ENCODE measurements at regions of chr4 and their contacts with region 1.

Region 1: DNA sequence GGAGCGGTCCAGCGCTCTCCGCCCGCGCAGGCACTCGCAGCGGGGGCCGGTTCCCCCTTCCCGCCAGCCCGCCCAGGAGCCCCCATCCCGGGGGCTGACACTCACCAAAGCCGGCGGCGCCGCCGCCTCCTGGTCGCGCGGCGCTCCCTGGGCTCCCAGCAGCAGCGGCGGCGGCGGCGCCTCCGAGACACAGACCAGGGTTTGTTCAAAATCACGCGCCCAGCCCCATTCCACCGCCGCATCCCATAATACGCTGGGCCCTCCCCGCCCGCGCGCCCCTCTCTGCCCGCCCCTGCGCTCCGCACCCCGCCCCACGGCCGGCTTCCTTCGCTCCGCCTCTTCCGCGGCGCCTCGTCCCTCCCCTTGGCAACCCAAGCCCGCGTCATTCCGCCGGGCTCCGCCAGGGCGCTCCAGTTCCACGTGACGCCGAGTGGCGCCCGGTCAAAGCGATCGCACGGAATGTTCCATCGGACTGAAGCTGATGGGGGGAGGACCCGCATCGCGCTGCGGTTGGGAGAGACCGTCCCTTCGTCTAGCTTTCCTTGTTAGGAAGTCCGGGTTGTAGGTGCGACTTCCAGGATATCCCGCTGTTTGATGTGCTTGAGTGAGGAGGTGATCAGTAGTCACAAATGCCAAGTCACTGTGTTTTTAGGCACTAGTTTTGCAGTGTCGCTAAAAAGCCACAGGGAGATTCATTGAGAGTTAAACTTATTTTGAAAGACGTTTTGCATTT is 2.2 kb upstream of the LIN54 start:
- DNase-seq: peak; percentile 95 to 97
- H3K4me3 ChIP-seq: peak overlapping the region; percentile 81 to 91 (median 85)
- H3K27ac ChIP-seq: peak overlapping the region; percentile 57 to 89 (median 78)
- H3K4me1 ChIP-seq: peaks cover 8 to 28% of the 10 kb centered on the region in 2 donors
- H3K27me3 ChIP-seq: no peaks in the 10 kb centered on the region
- CTCF ChIP-seq: peak in 5 of 6 experiments; percentile 23 to 69 (median 55)
- POLR2A ChIP-seq: peak in 1 of 2 donors; percentile 80

Region 2: DNA sequence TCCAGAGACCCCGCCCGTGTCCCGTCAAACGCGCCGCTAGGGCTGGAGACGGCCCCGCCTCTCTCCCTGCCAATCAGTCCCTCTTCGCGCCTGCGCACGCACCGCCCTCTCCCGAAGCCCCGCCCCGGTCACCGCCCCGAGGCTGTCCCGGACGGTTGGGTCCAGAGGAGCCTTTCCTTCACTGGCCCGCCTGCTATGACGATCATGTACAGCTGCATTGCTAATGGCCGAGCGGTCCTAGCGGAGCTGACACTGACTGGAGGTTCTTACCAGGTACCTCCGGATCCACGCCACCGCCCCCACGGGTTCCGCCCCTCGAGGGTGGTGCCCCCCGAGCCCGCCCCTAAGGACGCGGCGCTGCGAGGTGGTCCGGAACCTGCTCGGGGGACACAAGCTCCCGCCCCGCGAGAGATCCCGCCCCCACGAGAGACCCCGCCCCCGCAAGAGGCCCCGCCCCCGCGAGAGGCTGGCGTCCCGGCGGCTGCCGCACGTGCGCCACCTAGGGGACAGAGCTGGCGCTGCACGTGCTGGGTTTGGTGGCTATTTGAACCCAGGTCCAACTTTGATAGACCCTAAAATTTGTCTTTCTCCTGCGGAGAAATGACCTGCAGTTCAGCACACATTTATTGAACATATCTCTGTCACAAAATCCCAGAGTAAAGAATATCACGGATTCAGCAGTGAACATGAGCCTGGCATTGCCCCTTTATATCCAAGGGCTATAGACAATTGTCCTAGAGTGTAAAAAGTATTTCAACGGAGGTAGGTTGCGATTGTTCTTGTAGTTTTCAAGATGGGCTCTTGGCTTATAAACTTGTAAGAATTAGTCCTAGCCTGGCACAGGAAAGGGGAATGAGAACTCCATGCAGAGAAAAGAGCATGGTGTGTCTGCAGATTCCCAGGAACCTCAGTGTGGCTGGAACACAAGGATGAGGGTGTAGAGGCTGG is 727.7 kb before region 1 on chr4:
- intact Hi-C with region 1: loop called (anchors 10 kb)
- DNase-seq: peak; percentile 100
- H3K4me3 ChIP-seq: peak overlapping the region in 1 of 3 donors; percentile 21
- H3K27ac ChIP-seq: peak overlapping the region in 2 of 3 donors; percentile 48 to 56
- H3K4me1 ChIP-seq: no peaks in the 10 kb centered on the region
- H3K27me3 ChIP-seq: no peaks in the 10 kb centered on the region
- CTCF ChIP-seq: peak; percentile 68 to 100 (median 89)
- POLR2A ChIP-seq: peak in 1 of 2 donors; percentile 41

Region 3: GRCh38 chr4:82428969-82429727 is 583.7 kb before region 1 on chr4:
- intact Hi-C with region 1: loop called (anchors 10 kb)
- DNase-seq: peak; percentile 90 to 93
- H3K4me3 ChIP-seq: peak overlapping the region; percentile 43 to 98 (median 98)
- H3K27ac ChIP-seq: peak overlapping the region; percentile 93 to 98 (median 97)
- H3K4me1 ChIP-seq: peaks cover 27 to 28% of the 10 kb centered on the region in 2 donors
- H3K27me3 ChIP-seq: no peaks in the 10 kb centered on the region
- CTCF ChIP-seq: peak; percentile 46 to 97 (median 96)
- POLR2A ChIP-seq: peak; percentile 1 to 90

Region 4: DNA sequence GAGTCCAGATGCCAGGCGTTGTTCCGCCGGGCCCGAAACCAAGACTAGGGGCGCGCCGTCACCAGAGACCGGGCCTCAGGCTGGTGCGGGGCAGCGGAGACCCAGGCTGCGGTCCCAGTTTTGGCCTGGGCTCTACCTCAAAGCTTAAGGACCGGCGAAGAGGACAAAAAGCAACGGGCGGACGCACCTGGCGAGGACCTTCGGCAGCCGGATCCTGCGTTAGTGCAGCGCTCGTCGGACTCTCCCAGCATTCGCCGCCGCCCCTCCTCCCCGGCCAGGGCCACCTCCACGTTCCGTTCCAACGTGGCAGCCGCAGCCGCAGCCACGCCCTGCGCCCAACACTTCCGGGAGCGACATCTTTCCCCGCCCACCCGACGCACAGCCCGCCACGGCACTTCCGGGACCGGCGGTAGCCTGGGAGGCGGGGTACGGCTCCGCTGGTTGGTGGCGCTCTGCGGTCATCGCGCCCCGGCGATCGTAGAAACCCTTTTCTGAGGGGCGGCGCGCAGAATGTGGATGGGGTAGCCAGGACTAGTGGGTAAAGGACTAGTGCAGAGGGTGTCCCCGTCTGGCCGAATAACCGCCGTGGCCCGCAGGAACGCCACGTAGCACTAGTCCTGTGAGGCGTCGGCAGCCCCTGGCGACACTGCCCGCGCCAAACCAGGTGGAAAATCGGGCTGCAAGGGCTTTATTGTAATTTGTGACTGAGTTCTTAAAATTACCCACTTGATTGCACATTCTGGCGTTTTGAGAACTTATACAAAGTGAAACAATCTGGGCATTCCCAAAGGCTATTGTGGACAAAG is 121.7 kb before region 1 on chr4 and contains the start of gene SEC31A:
- intact Hi-C with region 1: loop called (anchors 5 kb)
- DNase-seq: peak; percentile 96
- H3K4me3 ChIP-seq: peak within 1 kb of the TSS; percentile 70 to 92 (median 81)
- H3K27ac ChIP-seq: peak within 1 kb of the TSS; percentile 94 to 98 (median 98)
- H3K4me1 ChIP-seq: peaks cover 13 to 15% of the 10 kb centered on the region in 2 donors
- H3K27me3 ChIP-seq: no peaks in the 10 kb centered on the region
- CTCF ChIP-seq: peak in 1 of 6 experiments; percentile 13
- POLR2A ChIP-seq: peak; percentile 42 to 96
- total RNA-seq, gene SEC31A: 263 to 367 (median 292) TPM

Region 5: GRCh38 chr4:83034630-83035494 is 22.0 kb after region 1 on chr4 and contains the start of gene COPS4:
- intact Hi-C with region 1: loop called (anchors 2 kb)
- DNase-seq: peak; percentile 98 to 99
- H3K4me3 ChIP-seq: peak within 1 kb of the TSS; percentile 44 to 63 (median 56)
- H3K27ac ChIP-seq: peak within 1 kb of the TSS; percentile 70 to 89 (median 72)
- H3K4me1 ChIP-seq: peaks cover 14 to 22% of the 10 kb centered on the region in 2 donors
- H3K27me3 ChIP-seq: no peaks in the 10 kb centered on the region
- CTCF ChIP-seq: peak in 3 of 6 experiments; percentile 7 to 33 (median 25)
- POLR2A ChIP-seq: peak in 1 of 2 donors; percentile 74
- total RNA-seq, gene COPS4: 35.3 to 69.9 (median 50.4) TPM

Measured in thyroid gland (tissue), 4 donors.